ENCODE measurements at regions of chr17 and their contacts with region 1.

Region 1: GRCh38 chr17:21318439-21318838 is 33.9 kb downstream of the MAP2K3 start:
- DNase-seq: no peak
- ATAC-seq: no peak
- H3K4me3 ChIP-seq: no peak overlapping the region
- H3K27ac ChIP-seq: no peak overlapping the region
- H3K4me1 ChIP-seq: no peaks in the 10 kb centered on the region
- H3K27me3 ChIP-seq: no peaks in the 10 kb centered on the region
- CTCF ChIP-seq: no peak

Region 2: DNA sequence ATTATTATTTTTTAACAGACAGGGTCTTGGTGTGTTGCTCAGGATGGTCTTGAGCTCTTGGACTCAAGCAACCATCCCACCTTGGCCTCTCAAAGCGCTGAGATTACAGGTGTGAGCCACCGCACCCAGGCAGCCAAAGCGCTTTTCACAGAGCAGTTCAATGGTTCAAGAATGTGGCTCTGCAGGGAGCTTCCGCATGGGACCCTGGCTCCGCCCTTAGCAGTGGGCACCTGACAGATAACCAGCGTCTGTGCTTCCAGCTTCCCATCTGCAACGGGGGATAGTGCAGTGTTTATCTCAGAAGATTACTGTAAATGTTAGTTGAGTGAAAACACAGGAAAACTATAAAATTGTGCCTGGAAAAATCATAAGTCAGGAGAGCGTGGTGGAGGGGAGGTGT is 157.1 kb after region 1 on chr17:
- CTCF ChIA-PET with region 1: no interaction called
- POLR2A ChIA-PET with region 1: no interaction called
- intact Hi-C with region 1: no loop called
- DNase-seq: no peak
- ATAC-seq: no peak
- H3K4me3 ChIP-seq: no peak overlapping the region
- H3K27ac ChIP-seq: no peak overlapping the region
- H3K4me1 ChIP-seq: no peaks in the 10 kb centered on the region
- H3K27me3 ChIP-seq: peaks cover 97% of the 10 kb centered on the region
- CTCF ChIP-seq: no peak

Region 3: GRCh38 chr17:21511363-21512198 is 193.1 kb after region 1 on chr17:
- CTCF ChIA-PET with region 1: no interaction called
- POLR2A ChIA-PET with region 1: no interaction called
- intact Hi-C with region 1: loop called (anchors 5 kb)
- DNase-seq: peak; percentile 81
- ATAC-seq: peak; percentile 90
- H3K4me3 ChIP-seq: no peak overlapping the region
- H3K27ac ChIP-seq: no peak overlapping the region
- H3K4me1 ChIP-seq: no peaks in the 10 kb centered on the region; the same call in 1 of the 2 replicates
- H3K27me3 ChIP-seq: 0 out of 2 replicates have a peak, but pooled peaks cover 4% of the 10 kb centered on the region
- CTCF ChIP-seq: peak; percentile 82

Measured in PC-3 (cell line).